ENCODE measurements at regions of chr10 and their contacts with region 1.

Region 1: DNA sequence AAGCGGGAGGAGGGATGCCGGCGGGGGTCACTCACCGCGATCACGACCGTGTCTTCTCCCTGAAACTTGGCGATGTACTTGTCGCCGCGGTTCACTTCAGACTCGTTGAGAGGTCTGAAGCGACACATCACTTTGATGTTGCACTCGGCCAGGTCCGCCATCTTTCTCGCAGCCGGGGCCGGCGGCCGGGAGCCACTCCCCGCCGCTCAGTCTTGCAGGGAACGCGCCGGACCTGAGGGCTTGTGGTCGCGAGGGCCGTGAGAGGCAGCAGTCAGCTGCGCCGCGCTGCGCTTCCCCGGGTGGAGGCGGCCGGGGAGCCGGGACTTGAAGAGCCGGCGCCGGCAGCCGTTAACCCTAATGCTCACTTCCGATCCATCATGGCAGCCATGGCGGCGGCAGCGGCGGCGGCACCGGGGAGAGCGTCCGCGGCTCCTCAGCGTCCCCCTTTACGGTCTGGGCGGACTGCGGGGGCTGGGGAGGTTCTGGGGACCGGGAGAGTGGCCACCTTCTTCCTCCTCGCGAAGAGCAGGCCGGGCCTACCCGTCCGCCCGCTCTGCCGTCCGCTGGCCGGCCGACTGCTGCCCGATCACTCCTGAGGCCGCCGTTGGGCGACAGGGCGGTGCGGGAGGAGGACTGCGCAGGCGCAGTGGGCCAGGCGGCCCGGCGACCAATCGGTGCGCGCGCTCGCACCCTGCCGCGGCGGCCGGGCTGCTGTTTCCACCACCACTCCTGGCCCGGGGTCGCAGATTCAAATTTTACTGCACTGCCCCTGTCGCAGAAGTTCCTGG is at the start of gene KIF5B:
- DNase-seq: peak; percentile 69 to 93 (median 84)
- ATAC-seq: peak; percentile 79
- H3K4me3 ChIP-seq: peak within 1 kb of the TSS; percentile 74 to 89
- H3K4me3 Mint-ChIP-seq: peak within 1 kb of the TSS; percentile 96
- H3K27ac ChIP-seq: peak within 1 kb of the TSS; percentile 66 to 89
- H3K27ac Mint-ChIP-seq: peak within 1 kb of the TSS; percentile 94
- H3K4me1 ChIP-seq: peaks cover 41% of the 10 kb centered on the region
- H3K4me1 Mint-ChIP-seq: peaks cover 51% of the 10 kb centered on the region
- H3K27me3 ChIP-seq: no peaks in the 10 kb centered on the region
- H3K27me3 Mint-ChIP-seq: no peaks in the 10 kb centered on the region
- CTCF ChIP-seq: no peak
- total RNA-seq, gene KIF5B: 53.2 to 53.8 TPM

Region 2: GRCh38 chr10:31318854-31319601 is 737.0 kb before region 1 on chr10 and contains the start of gene ZEB1:
- CTCF ChIA-PET with region 1: no interaction called
- POLR2A ChIA-PET with region 1: no interaction called
- intact Hi-C with region 1: loop called in 1 of 2 experiments (anchors 10 kb)
- DNase-seq: peak; percentile 83 to 97 (median 90)
- ATAC-seq: peak; percentile 42
- H3K4me3 ChIP-seq: peak within 1 kb of the TSS; percentile 92 to 95
- H3K4me3 Mint-ChIP-seq: peak within 1 kb of the TSS; percentile 100
- H3K27ac ChIP-seq: peak within 1 kb of the TSS; percentile 90 to 95
- H3K27ac Mint-ChIP-seq: peak within 1 kb of the TSS; percentile 100
- H3K4me1 ChIP-seq: peaks cover 28% of the 10 kb centered on the region
- H3K4me1 Mint-ChIP-seq: peaks cover 39% of the 10 kb centered on the region
- H3K27me3 ChIP-seq: no peaks in the 10 kb centered on the region
- H3K27me3 Mint-ChIP-seq: no peaks in the 10 kb centered on the region
- CTCF ChIP-seq: no peak
- total RNA-seq, gene ZEB1: 145 to 153 TPM

Region 3: DNA sequence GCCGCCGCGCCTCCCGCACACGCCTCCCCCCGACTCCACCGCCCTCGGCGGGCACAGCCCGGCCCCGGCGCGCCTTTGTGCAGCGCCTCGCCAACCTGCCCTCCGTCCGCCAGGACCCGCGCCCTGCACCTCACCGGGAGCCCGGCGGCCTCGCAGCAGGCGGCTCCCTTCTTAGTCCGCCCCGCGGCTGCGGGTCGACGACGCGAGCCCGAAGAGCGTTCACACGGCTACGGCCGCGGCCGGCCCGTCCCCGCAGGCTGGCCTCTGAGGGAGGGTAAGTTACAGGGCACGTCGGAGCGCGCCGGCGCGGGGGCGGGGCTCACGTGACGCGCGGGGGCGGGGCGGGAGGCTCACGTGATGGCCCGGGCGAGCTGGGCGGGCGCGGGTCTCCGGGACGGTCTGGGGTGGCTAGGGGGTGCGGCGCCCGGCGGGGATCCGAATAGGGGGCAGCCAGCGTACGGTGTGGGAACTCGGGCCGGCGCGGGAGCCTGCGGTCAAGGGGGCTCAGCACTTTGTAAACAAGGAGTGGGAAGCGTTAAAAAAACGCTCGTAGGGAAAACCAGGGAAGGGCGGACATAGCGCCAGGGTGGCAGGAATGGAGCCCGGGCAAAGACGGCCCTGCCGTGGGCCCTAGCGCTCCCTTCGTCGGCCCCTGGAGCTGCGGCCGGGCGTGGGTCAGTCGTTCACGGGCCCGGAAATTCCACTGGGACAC is 127.3 kb before region 1 on chr10 and contains the start of gene ARHGAP12:
- CTCF ChIA-PET with region 1: no interaction called
- POLR2A ChIA-PET with region 1: interaction called, 3 read pairs
- intact Hi-C with region 1: loop called (anchors 1 kb)
- DNase-seq: peak; percentile 70 to 92 (median 84)
- ATAC-seq: peak; percentile 67
- H3K4me3 ChIP-seq: peak within 1 kb of the TSS; percentile 90 to 95
- H3K4me3 Mint-ChIP-seq: peak within 1 kb of the TSS; percentile 94
- H3K27ac ChIP-seq: peak within 1 kb of the TSS; percentile 65 to 87
- H3K27ac Mint-ChIP-seq: peak within 1 kb of the TSS; percentile 83
- H3K4me1 ChIP-seq: peaks cover 41% of the 10 kb centered on the region
- H3K4me1 Mint-ChIP-seq: peaks cover 49% of the 10 kb centered on the region
- H3K27me3 ChIP-seq: no peaks in the 10 kb centered on the region
- H3K27me3 Mint-ChIP-seq: no peaks in the 10 kb centered on the region
- CTCF ChIP-seq: no peak
- total RNA-seq, gene ARHGAP12: 15.7 to 15.9 TPM

Region 4: GRCh38 chr10:32017021-32017420 is 39.0 kb before region 1 on chr10:
- CTCF ChIA-PET with region 1: interaction called, 4 read pairs
- POLR2A ChIA-PET with region 1: no interaction called
- intact Hi-C with region 1: loop called in 1 of 2 experiments (anchors 5 kb)
- DNase-seq: no peak
- ATAC-seq: no peak
- H3K4me3 ChIP-seq: no peak overlapping the region
- H3K4me3 Mint-ChIP-seq: no peak overlapping the region
- H3K27ac ChIP-seq: no peak overlapping the region
- H3K27ac Mint-ChIP-seq: no peak overlapping the region
- H3K4me1 ChIP-seq: no peaks in the 10 kb centered on the region
- H3K4me1 Mint-ChIP-seq: no peaks in the 10 kb centered on the region
- H3K27me3 ChIP-seq: no peaks in the 10 kb centered on the region
- H3K27me3 Mint-ChIP-seq: no peaks in the 10 kb centered on the region
- CTCF ChIP-seq: no peak

Region 5: GRCh38 chr10:32036913-32037312 is 19.1 kb before region 1 on chr10:
- CTCF ChIA-PET with region 1: no interaction called
- POLR2A ChIA-PET with region 1: interaction called, 4 read pairs
- intact Hi-C with region 1: loop called in 1 of 2 experiments (anchors 2 kb)
- DNase-seq: no peak
- ATAC-seq: no peak
- H3K4me3 ChIP-seq: no peak overlapping the region
- H3K4me3 Mint-ChIP-seq: no peak overlapping the region
- H3K27ac ChIP-seq: no peak overlapping the region
- H3K27ac Mint-ChIP-seq: no peak overlapping the region
- H3K4me1 ChIP-seq: no peaks in the 10 kb centered on the region
- H3K4me1 Mint-ChIP-seq: peaks cover 21% of the 10 kb centered on the region
- H3K27me3 ChIP-seq: no peaks in the 10 kb centered on the region
- H3K27me3 Mint-ChIP-seq: no peaks in the 10 kb centered on the region
- CTCF ChIP-seq: no peak

Region 6: DNA sequence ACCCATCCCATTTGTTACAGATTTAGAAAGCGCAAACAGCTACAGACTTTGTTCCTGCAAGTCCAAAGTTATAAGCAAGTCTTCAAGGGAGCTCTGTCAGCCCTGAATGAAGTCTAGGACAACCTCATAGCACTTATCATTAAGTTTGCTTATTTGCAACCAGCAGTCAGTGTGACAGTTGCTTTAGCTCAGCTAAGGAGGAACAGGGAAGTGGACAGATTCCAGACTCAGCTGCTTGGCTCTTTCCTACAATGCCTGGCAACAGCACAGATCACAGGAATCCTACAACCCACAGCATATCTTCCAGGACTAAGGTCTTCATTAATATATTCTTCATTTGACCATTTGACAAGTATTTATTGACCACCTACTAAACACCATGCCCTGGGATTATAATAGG is 17.7 kb after region 1 on chr10:
- CTCF ChIA-PET with region 1: no interaction called
- POLR2A ChIA-PET with region 1: no interaction called
- intact Hi-C with region 1: no loop called
- DNase-seq: no peak
- ATAC-seq: no peak
- H3K4me3 ChIP-seq: no peak overlapping the region
- H3K4me3 Mint-ChIP-seq: no peak overlapping the region
- H3K27ac ChIP-seq: no peak overlapping the region
- H3K27ac Mint-ChIP-seq: no peak overlapping the region
- H3K4me1 ChIP-seq: no peaks in the 10 kb centered on the region
- H3K4me1 Mint-ChIP-seq: no peaks in the 10 kb centered on the region
- H3K27me3 ChIP-seq: no peaks in the 10 kb centered on the region
- H3K27me3 Mint-ChIP-seq: no peaks in the 10 kb centered on the region
- CTCF ChIP-seq: no peak

Region 7: GRCh38 chr10:32210306-32211045 is 154.5 kb after region 1 on chr10:
- CTCF ChIA-PET with region 1: no interaction called
- POLR2A ChIA-PET with region 1: no interaction called
- intact Hi-C with region 1: no loop called
- DNase-seq: peak in 2 of 9 experiments; percentile 5 to 15
- ATAC-seq: no peak
- H3K4me3 ChIP-seq: no peak overlapping the region
- H3K4me3 Mint-ChIP-seq: no peak overlapping the region
- H3K27ac ChIP-seq: no peak overlapping the region
- H3K27ac Mint-ChIP-seq: no peak overlapping the region
- H3K4me1 ChIP-seq: no peaks in the 10 kb centered on the region
- H3K4me1 Mint-ChIP-seq: no peaks in the 10 kb centered on the region
- H3K27me3 ChIP-seq: no peaks in the 10 kb centered on the region
- H3K27me3 Mint-ChIP-seq: peaks cover 4% of the 10 kb centered on the region
- CTCF ChIP-seq: no peak

Region 8: GRCh38 chr10:32378363-32379317 is 322.6 kb after region 1 on chr10:
- CTCF ChIA-PET with region 1: no interaction called
- POLR2A ChIA-PET with region 1: interaction called, 3 read pairs
- intact Hi-C with region 1: loop called (anchors 5 to 10 kb)
- DNase-seq: peak; percentile 86 to 96 (median 93)
- ATAC-seq: peak; percentile 88
- H3K4me3 ChIP-seq: peak overlapping the region; percentile 72 to 84
- H3K4me3 Mint-ChIP-seq: no peak overlapping the region
- H3K27ac ChIP-seq: peak overlapping the region; percentile 68 to 72
- H3K27ac Mint-ChIP-seq: no peak overlapping the region
- H3K4me1 ChIP-seq: peaks cover 19% of the 10 kb centered on the region
- H3K4me1 Mint-ChIP-seq: peaks cover 26% of the 10 kb centered on the region
- H3K27me3 ChIP-seq: no peaks in the 10 kb centered on the region
- H3K27me3 Mint-ChIP-seq: no peaks in the 10 kb centered on the region
- CTCF ChIP-seq: no peak

Region 9: GRCh38 chr10:33143160-33143728 is 1087.2 kb after region 1 on chr10:
- CTCF ChIA-PET with region 1: no interaction called
- POLR2A ChIA-PET with region 1: no interaction called
- intact Hi-C with region 1: loop called in 1 of 2 experiments (anchors 10 kb)
- DNase-seq: peak in 6 of 9 experiments; percentile 21 to 65 (median 42)
- ATAC-seq: peak; percentile 9
- H3K4me3 ChIP-seq: no peak overlapping the region
- H3K4me3 Mint-ChIP-seq: no peak overlapping the region
- H3K27ac ChIP-seq: no peak overlapping the region
- H3K27ac Mint-ChIP-seq: peak overlapping the region; percentile 55
- H3K4me1 ChIP-seq: peaks cover 33% of the 10 kb centered on the region
- H3K4me1 Mint-ChIP-seq: peaks cover 49% of the 10 kb centered on the region
- H3K27me3 ChIP-seq: no peaks in the 10 kb centered on the region
- H3K27me3 Mint-ChIP-seq: no peaks in the 10 kb centered on the region
- CTCF ChIP-seq: no peak